ENCODE measurements at regions of chr17 and their contacts with region 1.

Region 1: GRCh38 chr17:79970576-79971068 is 65.0 kb downstream of the TBC1D16 start:
- DNase-seq: no peak
- H3K4me3 ChIP-seq: no peak overlapping the region
- H3K27ac ChIP-seq: no peak overlapping the region
- H3K4me1 ChIP-seq: peaks cover 0 to 4% (median 2%) of the 10 kb centered on the region in 4 experiments; a peak in 4 of 7 replicates
- H3K27me3 ChIP-seq: no peaks in the 10 kb centered on the region
- CTCF ChIP-seq: peak; percentile 87 to 98 (median 95)
- EP300 ChIP-seq: no peak
- POLR2A ChIP-seq: no peak
- RAD21 ChIP-seq: peak; percentile 77 to 85

Region 2: GRCh38 chr17:79855331-79856124 is 115.1 kb before region 1 on chr17:
- CTCF ChIA-PET with region 1: interaction called, 14 read pairs
- POLR2A ChIA-PET with region 1: no interaction called
- DNase-seq: no peak
- H3K4me3 ChIP-seq: no peak overlapping the region
- H3K27ac ChIP-seq: no peak overlapping the region
- H3K4me1 ChIP-seq: peaks cover 0 to under 1% (median 0%) of the 10 kb centered on the region in 4 experiments; a peak in 2 of 7 replicates
- H3K27me3 ChIP-seq: 0 out of 7 replicates have a peak, but pooled peaks cover 0 to 2% (median 0%) of the 10 kb centered on the region in 4 experiments
- CTCF ChIP-seq: no peak
- EP300 ChIP-seq: no peak
- POLR2A ChIP-seq: no peak
- RAD21 ChIP-seq: no peak

Region 3: GRCh38 chr17:79923974-79924638 is 46.5 kb before region 1 on chr17:
- CTCF ChIA-PET with region 1: interaction called, 16 read pairs
- POLR2A ChIA-PET with region 1: no interaction called
- DNase-seq: peak; percentile 50 to 99
- H3K4me3 ChIP-seq: no peak overlapping the region
- H3K27ac ChIP-seq: no peak overlapping the region
- H3K4me1 ChIP-seq: peaks cover 0 to 16% (median 6%) of the 10 kb centered on the region in 4 experiments; a peak in 2 of 7 replicates
- H3K27me3 ChIP-seq: peaks cover 0 to 14% (median under 1%) of the 10 kb centered on the region in 4 experiments; a peak in 2 of 7 replicates
- CTCF ChIP-seq: peak; percentile 94 to 98 (median 95)
- EP300 ChIP-seq: no peak
- POLR2A ChIP-seq: no peak
- RAD21 ChIP-seq: peak; percentile 80 to 84

Region 4: GRCh38 chr17:79951361-79952264 is 19.0 kb before region 1 on chr17:
- CTCF ChIA-PET with region 1: interaction called, 187 read pairs
- POLR2A ChIA-PET with region 1: interaction called, 25 read pairs
- DNase-seq: no peak
- H3K4me3 ChIP-seq: peak overlapping the region in 1 of 4 experiments; percentile 54; a peak in 1 of 8 replicates
- H3K27ac ChIP-seq: no peak overlapping the region; the same call in 1 of the 2 replicates
- H3K4me1 ChIP-seq: peaks cover 20 to 64% (median 47%) of the 10 kb centered on the region in 4 experiments
- H3K27me3 ChIP-seq: no peaks in the 10 kb centered on the region
- CTCF ChIP-seq: no peak
- EP300 ChIP-seq: no peak
- POLR2A ChIP-seq: no peak
- RAD21 ChIP-seq: no peak

Region 5: GRCh38 chr17:80008383-80008840 is 37.8 kb after region 1 on chr17:
- CTCF ChIA-PET with region 1: interaction called, 12 read pairs
- POLR2A ChIA-PET with region 1: no interaction called
- DNase-seq: peak; percentile 38 to 98
- H3K4me3 ChIP-seq: no peak overlapping the region
- H3K27ac ChIP-seq: no peak overlapping the region
- H3K4me1 ChIP-seq: peaks cover 0 to 8% (median 3%) of the 10 kb centered on the region in 4 experiments; a peak in 5 of 7 replicates
- H3K27me3 ChIP-seq: no peaks in the 10 kb centered on the region
- CTCF ChIP-seq: peak; percentile 92 to 98 (median 96)
- EP300 ChIP-seq: no peak
- POLR2A ChIP-seq: no peak
- RAD21 ChIP-seq: peak; percentile 65 to 76

Region 6: DNA sequence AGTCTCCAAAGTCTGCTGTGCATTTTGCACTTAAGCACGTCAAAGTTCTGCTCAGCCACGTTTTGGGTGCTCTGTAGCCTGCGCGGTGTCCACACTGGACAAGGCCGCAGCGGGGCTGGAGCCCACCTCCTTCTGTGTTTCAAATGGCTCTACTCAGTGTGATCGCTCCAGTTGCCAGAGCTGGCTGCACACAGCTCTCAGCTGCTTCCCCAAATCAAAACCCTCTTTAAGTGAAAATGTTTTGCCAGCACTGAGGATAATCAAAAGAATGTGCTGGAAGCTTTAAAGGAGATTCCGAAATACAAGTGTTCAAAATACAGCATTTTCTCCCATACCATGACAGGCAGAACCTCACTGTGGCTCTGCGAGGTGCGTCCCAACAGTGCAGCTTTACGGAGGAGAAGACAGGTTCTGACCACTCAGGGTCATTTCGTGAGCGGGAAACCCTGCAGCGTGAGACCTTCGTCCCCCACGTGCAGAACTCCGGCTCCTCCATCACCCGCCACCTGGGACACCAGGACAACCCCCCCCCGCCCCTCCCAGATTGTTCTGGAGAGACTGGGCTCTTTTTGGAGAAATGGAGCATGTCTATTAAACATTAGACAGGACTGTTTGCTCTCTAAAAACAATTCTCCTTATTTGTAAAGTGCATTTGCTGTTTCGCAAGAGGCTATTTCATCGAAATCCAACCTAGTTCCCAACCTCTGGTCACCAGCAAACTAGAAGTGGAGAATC is 48.5 kb after region 1 on chr17:
- CTCF ChIA-PET with region 1: no interaction called
- POLR2A ChIA-PET with region 1: no interaction called
- DNase-seq: no peak
- H3K4me3 ChIP-seq: no peak overlapping the region
- H3K27ac ChIP-seq: no peak overlapping the region
- H3K4me1 ChIP-seq: peaks cover 0 to 1% (median 0%) of the 10 kb centered on the region in 4 experiments; a peak in 5 of 7 replicates
- H3K27me3 ChIP-seq: no peaks in the 10 kb centered on the region
- CTCF ChIP-seq: no peak
- EP300 ChIP-seq: no peak
- POLR2A ChIP-seq: no peak
- RAD21 ChIP-seq: no peak